Right ventricle myocardium superior (tissue), 1 donor: ENCODE measurements at regions of chr7 and their contacts with region 1.

Region 1: GRCh38 chr7:24587848-24588247 is 14.6 kb downstream of the PALS2 start:
- DNase-seq: no peak
- ATAC-seq: peak; percentile 34

Region 2: DNA sequence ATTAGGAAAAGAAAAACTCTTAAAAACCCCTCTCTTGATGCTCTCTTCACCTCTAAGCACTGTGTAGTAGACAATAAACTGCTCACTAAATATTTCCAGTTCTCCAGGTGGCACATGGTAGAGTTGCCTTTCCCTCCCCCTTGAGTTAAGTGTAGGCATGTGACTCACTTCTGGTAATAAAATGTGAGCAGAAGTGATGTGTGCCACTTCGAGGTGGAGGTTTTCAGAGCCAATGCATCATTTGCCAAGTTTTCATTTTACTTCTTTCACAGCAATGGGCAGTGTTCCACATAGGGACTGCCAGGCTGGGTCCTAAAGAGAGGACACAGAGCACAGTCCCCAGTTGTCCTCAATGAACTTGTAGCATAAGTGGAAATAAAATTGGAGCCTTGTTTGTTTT is 435.5 kb before region 1 on chr7:
- intact Hi-C with region 1: no loop called
- DNase-seq: no peak
- ATAC-seq: no peak

Region 3: GRCh38 chr7:24521917-24522620 is 65.8 kb before region 1 on chr7:
- intact Hi-C with region 1: no loop called
- DNase-seq: no peak
- ATAC-seq: no peak

Region 4: GRCh38 chr7:24653316-24654085 is 65.7 kb after region 1 on chr7:
- intact Hi-C with region 1: loop called (anchors 10 kb)
- DNase-seq: no peak
- ATAC-seq: no peak